ENCODE measurements at regions of chr5 and their contacts with region 1.

Region 1: GRCh38 chr5:146993876-146994530 is 115.4 kb upstream of the PPP2R2B start:
- DNase-seq: peak; percentile 33
- H3K4me3 Mint-ChIP-seq: no peak overlapping the region
- H3K27ac Mint-ChIP-seq: no peak overlapping the region
- H3K4me1 Mint-ChIP-seq: no peaks in the 10 kb centered on the region
- H3K27me3 Mint-ChIP-seq: no peaks in the 10 kb centered on the region
- CTCF ChIP-seq: no peak

Region 2: GRCh38 chr5:147169399-147169798 is 175.4 kb after region 1 on chr5:
- CTCF ChIA-PET with region 1: no interaction called
- POLR2A ChIA-PET with region 1: no interaction called
- intact Hi-C with region 1: loop called (anchors 10 kb)
- DNase-seq: peak; percentile 29
- H3K4me3 Mint-ChIP-seq: no peak overlapping the region
- H3K27ac Mint-ChIP-seq: no peak overlapping the region
- H3K4me1 Mint-ChIP-seq: no peaks in the 10 kb centered on the region
- H3K27me3 Mint-ChIP-seq: peaks cover under 1% of the 10 kb centered on the region
- CTCF ChIP-seq: no peak